Mammary epithelial cell (primary cell): ENCODE measurements at regions of chr5 and their contacts with region 1.

Region 1: GRCh38 chr5:58505971-58506640 is 14.9 kb downstream of the GAPT start:
- DNase-seq: no peak
- H3K4me3 ChIP-seq: no peak overlapping the region
- H3K27ac ChIP-seq: no peak overlapping the region
- H3K4me1 ChIP-seq: no peaks in the 10 kb centered on the region
- H3K27me3 ChIP-seq: peaks cover 5% of the 10 kb centered on the region
- CTCF ChIP-seq: no peak

Region 2: DNA sequence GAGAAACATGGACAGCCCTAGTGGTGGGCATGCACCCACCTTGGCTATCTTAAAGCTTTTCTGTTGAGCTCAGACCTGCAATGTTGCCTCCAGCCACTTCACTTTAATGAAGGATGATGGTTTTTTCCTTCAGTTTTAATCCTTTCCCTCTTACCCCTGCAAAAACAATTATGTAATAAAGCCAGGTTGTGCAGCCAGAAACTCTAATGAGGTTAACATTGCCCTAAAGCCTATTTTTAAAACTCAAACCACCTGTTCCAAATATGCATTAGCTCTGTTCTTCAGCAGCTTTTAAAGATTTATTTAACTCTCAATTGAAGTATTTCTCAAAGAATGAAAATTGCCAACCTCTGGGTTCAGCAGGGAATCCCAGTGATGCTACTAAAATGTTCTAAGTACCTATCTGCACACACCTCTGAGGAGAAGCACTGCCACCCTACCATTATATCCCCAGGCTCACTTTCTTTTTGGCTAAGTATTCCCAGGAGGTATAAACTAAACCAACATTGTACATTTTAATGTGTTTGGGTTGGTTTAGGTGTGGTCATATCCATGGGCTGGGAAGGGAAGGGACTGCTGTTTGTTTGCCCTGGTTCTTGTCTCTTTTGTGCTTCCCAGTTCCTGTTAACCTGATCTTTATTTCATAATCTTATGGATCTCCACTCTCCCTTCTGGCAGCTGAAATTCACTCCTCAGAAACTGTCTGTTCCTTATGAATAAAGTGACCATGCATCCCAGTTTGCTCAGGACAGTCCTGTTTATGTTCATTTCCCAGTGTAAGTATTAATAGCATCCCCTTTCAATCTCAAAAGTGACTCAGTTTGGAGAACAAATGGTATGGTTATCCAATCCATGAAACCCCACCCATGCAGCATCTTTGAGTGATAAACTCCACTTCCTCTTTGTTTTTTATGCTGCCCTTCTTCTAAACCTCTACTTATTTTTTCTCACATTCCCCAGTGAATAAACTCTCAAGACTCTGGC is 328.4 kb after region 1 on chr5:
- CTCF ChIA-PET with region 1: no interaction called
- dilution Hi-C with region 1: no loop called
- in situ Hi-C with region 1: loop called in 1 of 2 experiments (anchors 10 kb)
- intact Hi-C with region 1: no loop called
- DNase-seq: no peak
- H3K4me3 ChIP-seq: no peak overlapping the region
- H3K27ac ChIP-seq: no peak overlapping the region
- H3K4me1 ChIP-seq: no peaks in the 10 kb centered on the region
- H3K27me3 ChIP-seq: peaks cover 9% of the 10 kb centered on the region
- CTCF ChIP-seq: no peak